Head of caudate nucleus (tissue), 42 donors: ENCODE measurements at regions of chr4 and their contacts with region 1.

Region 1: GRCh38 chr4:26319467-26319948 is 1.3 kb upstream of the RBPJ start:
- DNase-seq: peak; percentile 92 to 98 (median 96)

Region 2: GRCh38 chr4:25913851-25914669 is 405.4 kb before region 1 on chr4 and contains the start of gene SMIM20:
- intact Hi-C with region 1: loop called (anchors 10 kb)
- DNase-seq: peak; percentile 86 to 98 (median 95)

Region 3: GRCh38 chr4:26061248-26061986 is 258.1 kb before region 1 on chr4:
- intact Hi-C with region 1: no loop called
- DNase-seq: peak in 2 of 42 donors; percentile 11 to 38

Region 4: GRCh38 chr4:26235500-26235899 is 84.0 kb before region 1 on chr4:
- intact Hi-C with region 1: loop called (anchors 10 kb)
- DNase-seq: peak in 38 of 42 donors; percentile 15 to 80 (median 50)

Region 5: GRCh38 chr4:26803211-26803861 is 483.8 kb after region 1 on chr4:
- intact Hi-C with region 1: no loop called
- DNase-seq: peak in 5 of 42 donors; percentile 17 to 52 (median 20)